ENCODE measurements at regions of chr17 and their contacts with region 1.

Region 1: GRCh38 chr17:409848-410545 is 57.4 kb upstream of the RPH3AL start:
- DNase-seq: peak; percentile 100
- H3K4me3 ChIP-seq: peak overlapping the region; percentile 50 to 76 (median 65)
- H3K27ac ChIP-seq: 0 out of 2 replicates have a peak overlapping the region, but pooled peaks have one; percentile 44
- H3K4me1 ChIP-seq: peaks cover 0 to 8% (median 3%) of the 10 kb centered on the region in 4 experiments; a peak in 4 of 7 replicates
- H3K27me3 ChIP-seq: no peaks in the 10 kb centered on the region
- CTCF ChIP-seq: no peak
- EP300 ChIP-seq: no peak
- POLR2A ChIP-seq: peak in 1 of 2 experiments; percentile 47; a peak in 1 of 3 replicates
- RAD21 ChIP-seq: 0 out of 4 replicates have a peak, but pooled peaks of 1 of the 2 experiments have one; percentile 0

Region 2: DNA sequence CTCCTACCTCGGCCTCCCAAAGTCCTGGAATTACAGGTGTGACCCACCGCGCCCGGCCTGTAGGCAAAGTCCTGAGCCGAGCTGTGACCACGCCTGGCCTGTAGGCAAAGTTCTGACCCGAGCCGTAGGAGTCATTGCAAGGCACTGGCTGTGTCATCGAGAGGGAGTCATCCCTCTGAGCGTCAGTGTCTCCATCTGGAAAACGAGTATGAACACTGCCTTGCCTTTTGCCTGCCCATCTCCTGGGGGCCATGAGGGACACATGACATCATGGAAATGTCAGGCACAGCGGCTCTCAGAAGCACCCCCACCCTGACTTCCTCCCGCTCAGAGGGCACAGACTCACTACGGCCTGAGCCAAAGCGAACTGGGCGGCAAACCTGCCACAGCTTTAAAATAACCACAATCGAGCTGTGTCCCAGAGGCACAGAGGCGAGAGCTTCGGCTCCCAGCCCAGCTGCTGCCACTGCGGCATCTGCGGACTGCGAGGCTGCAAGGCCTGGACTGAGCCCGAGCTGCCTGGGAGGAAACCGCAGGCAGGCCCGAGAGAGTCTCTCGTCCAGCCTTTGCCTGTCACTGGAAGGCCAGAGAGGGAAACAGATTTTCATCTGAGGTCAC is 108.2 kb before region 1 on chr17:
- CTCF ChIA-PET with region 1: no interaction called
- POLR2A ChIA-PET with region 1: no interaction called
- DNase-seq: no peak
- H3K4me3 ChIP-seq: no peak overlapping the region
- H3K27ac ChIP-seq: no peak overlapping the region
- H3K4me1 ChIP-seq: peaks cover 0 to 10% (median 8%) of the 10 kb centered on the region in 4 experiments; a peak in 6 of 7 replicates
- H3K27me3 ChIP-seq: peaks cover 0 to 1% (median 0%) of the 10 kb centered on the region in 4 experiments; a peak in 2 of 7 replicates
- CTCF ChIP-seq: no peak
- EP300 ChIP-seq: no peak
- POLR2A ChIP-seq: no peak
- RAD21 ChIP-seq: no peak

Region 3: DNA sequence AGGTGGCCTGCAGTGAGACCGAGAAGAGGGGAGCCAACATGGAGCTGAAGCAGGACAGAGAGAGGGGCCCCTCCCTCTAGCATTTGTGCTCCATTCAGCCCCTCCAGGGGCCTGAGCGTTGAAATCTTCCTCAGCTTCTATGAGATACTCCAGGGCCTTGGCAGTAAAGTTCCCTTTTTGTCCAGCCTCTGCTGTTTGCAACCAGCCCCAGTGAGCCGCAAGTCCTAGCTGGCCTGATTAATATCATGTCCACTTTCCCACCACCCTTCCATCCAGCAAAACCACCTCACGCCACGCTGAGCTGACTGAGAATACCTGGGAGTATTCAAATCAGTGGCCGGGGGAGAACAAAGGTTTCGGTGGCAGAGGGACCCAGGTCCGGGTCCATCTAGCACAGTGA is 45.7 kb before region 1 on chr17:
- CTCF ChIA-PET with region 1: no interaction called
- POLR2A ChIA-PET with region 1: no interaction called
- DNase-seq: no peak
- H3K4me3 ChIP-seq: no peak overlapping the region
- H3K27ac ChIP-seq: no peak overlapping the region
- H3K4me1 ChIP-seq: no peaks in the 10 kb centered on the region
- H3K27me3 ChIP-seq: no peaks in the 10 kb centered on the region
- CTCF ChIP-seq: no peak
- EP300 ChIP-seq: no peak
- POLR2A ChIP-seq: no peak
- RAD21 ChIP-seq: no peak

Region 4: GRCh38 chr17:431494-431893 is 21.5 kb after region 1 on chr17:
- CTCF ChIA-PET with region 1: interaction called, 18 read pairs
- POLR2A ChIA-PET with region 1: no interaction called
- DNase-seq: no peak
- H3K4me3 ChIP-seq: no peak overlapping the region
- H3K27ac ChIP-seq: no peak overlapping the region
- H3K4me1 ChIP-seq: peaks cover 0 to 7% (median 7%) of the 10 kb centered on the region in 4 experiments; a peak in 4 of 7 replicates
- H3K27me3 ChIP-seq: no peaks in the 10 kb centered on the region
- CTCF ChIP-seq: no peak
- EP300 ChIP-seq: no peak
- POLR2A ChIP-seq: no peak
- RAD21 ChIP-seq: no peak

Region 5: GRCh38 chr17:491086-492021 is 81.4 kb after region 1 on chr17:
- CTCF ChIA-PET with region 1: interaction called, 12 read pairs
- POLR2A ChIA-PET with region 1: interaction called, 3 read pairs
- DNase-seq: peak in 1 of 2 experiments; percentile 77
- H3K4me3 ChIP-seq: peak overlapping the region; percentile 32 to 64 (median 50)
- H3K27ac ChIP-seq: no peak overlapping the region
- H3K4me1 ChIP-seq: peaks cover 8 to 16% (median 15%) of the 10 kb centered on the region in 4 experiments
- H3K27me3 ChIP-seq: peaks cover 5 to 21% (median 14%) of the 10 kb centered on the region in 4 experiments; a peak in 6 of 7 replicates
- CTCF ChIP-seq: peak in 1 of 3 experiments; percentile 0; a peak in 1 of 4 replicates
- EP300 ChIP-seq: no peak
- POLR2A ChIP-seq: no peak
- RAD21 ChIP-seq: no peak

Region 6: GRCh38 chr17:688100-688989 is 278.3 kb after region 1 on chr17:
- CTCF ChIA-PET with region 1: interaction called, 14 read pairs
- POLR2A ChIA-PET with region 1: interaction called, 5 read pairs
- DNase-seq: no peak
- H3K4me3 ChIP-seq: no peak overlapping the region
- H3K27ac ChIP-seq: no peak overlapping the region
- H3K4me1 ChIP-seq: no peaks in the 10 kb centered on the region
- H3K27me3 ChIP-seq: no peaks in the 10 kb centered on the region
- CTCF ChIP-seq: peak in 2 of 3 experiments; percentile 41 to 48; a peak in 2 of 4 replicates
- EP300 ChIP-seq: no peak
- POLR2A ChIP-seq: no peak
- RAD21 ChIP-seq: peak; percentile 45 to 55

Measured in H1 (cell line).